ENCODE measurements at regions of chr10 and their contacts with region 1.

Region 1: GRCh38 chr10:104300736-104301292 is 31.8 kb downstream of the GSTO2 start:
- DNase-seq: peak; percentile 87 to 91
- ATAC-seq: peak; percentile 83
- H3K4me3 ChIP-seq: no peak overlapping the region
- H3K27ac ChIP-seq: peak overlapping the region; percentile 87 to 97
- H3K4me1 ChIP-seq: peaks cover 0 to 4% of the 10 kb centered on the region in 2 donors
- H3K27me3 ChIP-seq: no peaks in the 10 kb centered on the region

Region 2: GRCh38 chr10:104387130-104387888 is 86.5 kb after region 1 on chr10:
- intact Hi-C with region 1: no loop called
- DNase-seq: no peak
- ATAC-seq: no peak
- H3K4me3 ChIP-seq: no peak overlapping the region
- H3K27ac ChIP-seq: no peak overlapping the region
- H3K4me1 ChIP-seq: no peaks in the 10 kb centered on the region
- H3K27me3 ChIP-seq: peaks cover 0 to 2% of the 10 kb centered on the region in 2 donors

Region 3: DNA sequence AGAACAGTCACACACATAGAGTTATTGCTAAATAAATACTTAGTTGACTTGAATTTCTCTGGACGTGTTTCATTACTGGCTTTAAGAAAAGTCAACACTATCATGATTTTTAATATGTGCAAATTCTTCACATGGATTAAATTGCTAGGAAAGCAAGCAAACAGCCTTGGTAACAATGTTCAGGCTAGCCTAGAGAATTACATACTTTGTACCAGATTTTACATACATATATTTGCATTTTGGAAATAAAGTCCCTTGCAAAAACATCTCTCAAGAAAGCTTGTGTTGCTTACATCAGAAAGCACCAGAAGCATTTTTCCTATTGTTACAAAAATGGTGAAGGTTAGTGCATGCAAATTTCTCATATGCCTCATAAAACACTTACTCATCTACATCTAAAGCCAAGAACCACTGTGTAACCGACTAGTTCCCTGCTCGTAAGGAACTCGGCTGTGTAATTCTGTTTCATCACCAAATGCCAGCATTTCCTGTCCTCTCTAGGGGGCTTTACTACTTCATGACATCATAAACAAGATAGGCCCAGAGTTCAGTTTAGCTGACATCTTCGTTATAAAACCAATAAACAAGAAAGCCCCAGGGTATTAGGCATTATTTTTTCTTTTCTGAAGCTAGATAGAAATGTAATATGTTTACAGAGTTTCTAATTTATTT is 140.7 kb after region 1 on chr10:
- intact Hi-C with region 1: loop called in 1 of 2 experiments (anchors 10 kb)
- DNase-seq: no peak
- ATAC-seq: peak; percentile 77
- H3K4me3 ChIP-seq: no peak overlapping the region
- H3K27ac ChIP-seq: no peak overlapping the region
- H3K4me1 ChIP-seq: peaks cover 1 to 5% of the 10 kb centered on the region in 2 donors
- H3K27me3 ChIP-seq: no peaks in the 10 kb centered on the region

Region 4: GRCh38 chr10:104527013-104527412 is 226.2 kb after region 1 on chr10:
- intact Hi-C with region 1: no loop called
- DNase-seq: no peak
- ATAC-seq: no peak
- H3K4me3 ChIP-seq: no peak overlapping the region
- H3K27ac ChIP-seq: no peak overlapping the region
- H3K4me1 ChIP-seq: no peaks in the 10 kb centered on the region
- H3K27me3 ChIP-seq: no peaks in the 10 kb centered on the region

Measured in aorta (tissue), 5 donors.